Activated CD8-positive, alpha-beta T cell treated with anti-CD3 and anti-CD28 coated beads, Interleukin-2, amount 10 ng/mL, durations not matched to agents 7 days and 5 days (primary cell): ENCODE measurements at regions of chr13 and their contacts with region 1.

Region 1: DNA sequence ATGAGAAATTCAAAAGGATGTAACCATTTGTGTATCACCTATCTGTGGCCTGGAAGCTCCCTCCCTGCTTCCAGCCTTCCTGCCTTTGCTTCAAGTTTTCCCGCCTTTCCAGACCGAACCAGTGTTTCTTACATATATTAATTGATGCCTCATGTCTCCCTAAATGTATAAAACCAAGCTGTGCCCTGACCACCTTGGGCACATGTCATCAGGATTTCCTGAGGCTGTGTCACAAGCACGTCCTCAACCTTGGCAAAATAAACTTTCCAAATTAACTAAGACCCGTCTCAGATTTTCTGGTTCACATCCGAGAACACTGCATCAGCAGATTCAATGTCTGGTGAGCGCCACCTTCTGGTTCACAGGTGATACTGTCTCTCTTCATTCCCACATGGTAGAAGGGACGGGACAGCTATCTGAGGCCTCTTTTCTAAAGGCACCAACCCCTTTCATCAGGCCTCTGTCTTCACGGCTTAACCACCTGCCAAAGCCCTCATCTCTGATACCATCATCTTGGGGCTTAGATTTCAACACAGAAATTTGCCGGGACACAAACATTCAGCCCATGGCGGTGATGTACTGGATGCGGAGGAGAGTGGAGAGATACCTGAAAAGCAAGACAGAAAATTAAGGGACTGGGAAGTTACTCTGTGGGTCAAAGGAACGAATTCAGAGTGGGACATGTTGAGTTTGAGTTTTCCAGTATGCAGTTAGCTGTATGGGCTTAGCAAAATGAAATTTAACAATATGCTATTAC is 58.7 kb upstream of the PABPC3 start:
- DNase-seq: peak; percentile 67
- ATAC-seq: peak; percentile 76
- H3K4me3 Mint-ChIP-seq: no peak overlapping the region
- H3K27ac Mint-ChIP-seq: no peak overlapping the region
- H3K4me1 Mint-ChIP-seq: no peaks in the 10 kb centered on the region
- H3K27me3 Mint-ChIP-seq: peaks cover 21% of the 10 kb centered on the region

Region 2: DNA sequence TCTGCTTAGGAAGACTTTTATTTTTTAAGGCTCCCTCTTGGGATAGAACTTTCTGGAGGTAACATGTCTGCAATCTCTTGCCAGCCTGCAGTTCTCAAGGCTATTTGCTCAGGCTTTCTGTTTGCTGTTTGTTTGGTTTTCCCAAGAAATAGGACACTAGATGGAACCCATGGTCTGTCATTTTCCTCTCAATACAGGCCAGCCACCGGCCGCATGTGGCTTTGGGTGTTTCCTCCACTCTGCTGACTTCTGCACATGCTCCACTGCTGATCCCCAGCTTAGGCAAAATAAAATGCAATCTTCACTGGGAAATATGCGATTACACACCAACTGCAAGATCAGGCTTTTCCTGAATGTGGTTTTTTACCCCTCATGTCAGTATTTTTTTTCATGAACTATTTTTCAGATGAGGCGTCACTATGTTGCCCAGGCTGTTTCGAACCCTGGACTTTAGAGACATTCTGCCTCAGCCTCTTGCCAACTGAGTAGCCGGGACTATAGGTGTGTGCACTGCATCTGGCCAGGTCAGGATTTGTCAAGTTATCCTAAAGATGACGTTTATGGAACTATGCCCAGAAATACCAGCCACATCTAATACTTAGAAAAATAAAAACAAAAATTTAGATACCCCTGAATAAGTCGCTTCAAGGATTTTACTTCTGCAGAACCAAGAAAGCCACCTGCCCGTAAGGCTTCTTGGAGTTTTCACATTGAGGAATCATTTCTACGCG is 35.6 kb before region 1 on chr13:
- CTCF ChIA-PET with region 1: interaction called, 13 read pairs
- POLR2A ChIA-PET with region 1: no interaction called
- DNase-seq: no peak
- ATAC-seq: no peak
- H3K4me3 Mint-ChIP-seq: no peak overlapping the region
- H3K27ac Mint-ChIP-seq: no peak overlapping the region
- H3K4me1 Mint-ChIP-seq: peaks cover 7% of the 10 kb centered on the region
- H3K27me3 Mint-ChIP-seq: peaks cover 36% of the 10 kb centered on the region

Region 3: GRCh38 chr13:25281193-25281934 is 244.1 kb after region 1 on chr13:
- CTCF ChIA-PET with region 1: no interaction called
- POLR2A ChIA-PET with region 1: no interaction called
- DNase-seq: no peak
- ATAC-seq: peak; percentile 58
- H3K4me3 Mint-ChIP-seq: no peak overlapping the region
- H3K27ac Mint-ChIP-seq: peak overlapping the region; percentile 81
- H3K4me1 Mint-ChIP-seq: peaks cover 65% of the 10 kb centered on the region
- H3K27me3 Mint-ChIP-seq: no peaks in the 10 kb centered on the region